ENCODE measurements at regions of chr5 and their contacts with region 1.

Region 1: GRCh38 chr5:96997265-96997859 is 61.5 kb downstream of the LNPEP start:
- DNase-seq: no peak

Region 2: GRCh38 chr5:96885518-96886338 is 111.6 kb before region 1 on chr5:
- intact Hi-C with region 1: loop called (anchors 10 kb)
- DNase-seq: no peak